ENCODE measurements at regions of chr22 and their contacts with region 1.

Region 1: GRCh38 chr22:35838855-35839576 is 121.3 kb downstream of the APOL5 start:
- DNase-seq: no peak
- H3K4me3 ChIP-seq: peak overlapping the region; percentile 56 to 95 (median 91)
- H3K27ac ChIP-seq: peak overlapping the region; percentile 88
- H3K4me1 ChIP-seq: peaks cover 35% of the 10 kb centered on the region
- H3K27me3 ChIP-seq: no peaks in the 10 kb centered on the region
- CTCF ChIP-seq: peak; percentile 28 to 53 (median 51)

Region 2: DNA sequence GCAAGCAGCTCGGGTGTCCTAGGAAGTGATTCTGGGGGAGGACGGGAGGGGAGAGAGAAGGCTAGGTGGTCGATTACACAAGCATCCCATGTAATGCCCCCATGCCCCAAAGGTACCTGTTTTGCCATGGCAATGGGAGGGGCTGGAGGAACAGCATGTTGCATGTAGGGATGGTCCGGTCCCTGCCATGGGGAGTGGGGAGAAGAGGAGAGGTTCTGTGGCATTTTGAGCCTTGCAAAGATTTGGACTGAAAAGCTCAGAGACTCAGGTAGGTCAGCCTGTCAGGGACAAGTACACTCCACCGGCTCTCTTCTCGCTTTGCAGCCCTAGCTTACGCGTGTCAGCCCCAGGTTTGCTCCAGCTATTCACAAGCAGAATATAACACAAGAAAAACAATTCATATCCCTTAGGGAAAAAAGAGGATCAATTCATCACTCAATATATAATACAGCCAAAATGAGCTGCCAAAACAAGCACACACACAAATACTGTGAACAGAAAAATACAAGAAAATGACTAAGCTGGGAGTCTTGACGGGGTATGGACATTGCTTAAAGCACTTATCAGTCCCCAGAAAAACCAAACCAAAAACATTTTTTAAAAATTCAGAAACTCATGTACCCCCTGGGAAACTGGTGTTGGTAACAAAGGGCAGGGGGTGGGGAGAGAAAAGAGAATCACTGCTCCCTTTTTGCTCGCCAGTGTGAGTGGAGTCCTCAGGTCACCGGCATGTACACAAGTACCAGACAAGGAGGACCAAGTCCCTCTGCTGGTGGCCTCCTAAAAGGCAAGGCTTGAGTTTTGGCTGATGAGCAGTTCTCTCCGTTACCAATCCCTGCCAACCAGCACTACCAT is 99.7 kb before region 1 on chr22:
- dilution Hi-C with region 1: no loop called
- DNase-seq: no peak
- H3K4me3 ChIP-seq: no peak overlapping the region
- H3K27ac ChIP-seq: no peak overlapping the region
- H3K4me1 ChIP-seq: peaks cover 4% of the 10 kb centered on the region
- H3K27me3 ChIP-seq: no peaks in the 10 kb centered on the region
- CTCF ChIP-seq: peak; percentile 14 to 32 (median 16)

Region 3: DNA sequence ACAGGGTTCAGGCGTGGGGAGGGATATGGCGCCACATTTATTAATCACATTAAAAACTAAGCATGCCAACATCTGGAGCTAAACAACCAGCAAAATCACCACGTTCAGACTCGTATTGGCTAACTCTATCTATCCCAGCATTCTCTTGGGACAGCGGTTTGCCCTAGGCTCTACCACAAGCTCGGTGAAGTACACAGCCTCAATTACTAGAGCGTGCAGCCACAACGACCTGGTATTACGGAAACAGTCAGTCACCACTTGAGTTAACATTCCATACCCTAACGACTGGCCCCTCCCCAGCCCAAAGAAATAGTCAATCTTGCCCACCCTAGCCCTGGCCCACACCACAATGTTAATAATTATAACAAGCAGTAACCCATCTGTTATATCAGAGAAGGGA is 89.2 kb before region 1 on chr22:
- dilution Hi-C with region 1: no loop called
- DNase-seq: no peak
- H3K4me3 ChIP-seq: no peak overlapping the region
- H3K27ac ChIP-seq: no peak overlapping the region
- H3K4me1 ChIP-seq: peaks cover 2% of the 10 kb centered on the region
- H3K27me3 ChIP-seq: no peaks in the 10 kb centered on the region
- CTCF ChIP-seq: no peak

Region 4: GRCh38 chr22:35783943-35784614 is 54.9 kb before region 1 on chr22:
- dilution Hi-C with region 1: loop called (anchors 5 kb)
- DNase-seq: peak; percentile 48
- H3K4me3 ChIP-seq: peak overlapping the region in 2 of 3 experiments; percentile 1 to 8
- H3K27ac ChIP-seq: peak overlapping the region; percentile 87
- H3K4me1 ChIP-seq: peaks cover 34% of the 10 kb centered on the region
- H3K27me3 ChIP-seq: no peaks in the 10 kb centered on the region
- CTCF ChIP-seq: no peak

Measured in keratinocyte (primary cell).